ENCODE measurements at regions of chr4 and their contacts with region 1.

Region 1: DNA sequence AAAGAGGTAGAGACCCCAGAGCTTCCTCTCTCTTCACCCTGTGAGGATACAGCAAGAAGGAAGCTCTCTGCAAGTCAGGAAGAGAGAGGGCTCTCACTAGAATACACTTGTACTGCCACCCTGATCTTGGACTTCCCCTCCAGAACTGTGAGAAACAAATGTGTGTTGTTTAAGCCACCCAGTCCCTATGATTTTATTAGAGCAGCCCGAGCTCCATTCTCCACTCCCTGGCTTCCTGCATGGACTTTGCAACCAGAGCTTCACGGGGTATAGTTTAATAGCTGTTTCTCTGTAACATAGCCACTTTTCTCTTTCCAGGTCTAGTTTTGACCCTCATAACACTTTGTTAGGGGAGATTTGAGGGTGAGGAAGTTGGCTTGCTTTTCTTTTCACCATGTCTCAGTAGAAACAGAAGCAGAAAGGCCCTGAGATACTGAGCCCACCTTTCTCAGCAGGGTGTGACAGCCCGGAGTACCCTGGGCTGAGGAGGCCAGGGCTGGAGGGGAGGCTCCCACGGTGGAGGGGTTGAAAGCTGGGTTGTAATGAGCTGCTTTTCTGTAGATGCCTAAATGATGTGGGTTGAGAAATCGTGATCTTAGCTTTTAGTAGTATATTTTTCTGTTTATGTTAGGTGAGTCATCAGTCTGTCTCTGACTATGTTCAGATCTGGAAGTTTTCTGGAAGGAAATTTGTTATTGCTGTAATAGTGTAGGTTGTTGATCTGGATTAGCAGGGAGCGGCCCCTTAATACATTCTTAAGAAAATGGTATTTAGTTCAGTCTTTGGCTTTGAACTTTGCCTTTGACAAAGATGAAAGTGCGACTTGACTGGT is 118.6 kb downstream of the PTTG2 start:
- DNase-seq: peak; percentile 88
- H3K4me3 ChIP-seq: no peak overlapping the region
- H3K27ac ChIP-seq: peak overlapping the region; percentile 75
- H3K4me1 ChIP-seq: peaks cover 49% of the 10 kb centered on the region
- H3K27me3 ChIP-seq: no peaks in the 10 kb centered on the region

Region 2: DNA sequence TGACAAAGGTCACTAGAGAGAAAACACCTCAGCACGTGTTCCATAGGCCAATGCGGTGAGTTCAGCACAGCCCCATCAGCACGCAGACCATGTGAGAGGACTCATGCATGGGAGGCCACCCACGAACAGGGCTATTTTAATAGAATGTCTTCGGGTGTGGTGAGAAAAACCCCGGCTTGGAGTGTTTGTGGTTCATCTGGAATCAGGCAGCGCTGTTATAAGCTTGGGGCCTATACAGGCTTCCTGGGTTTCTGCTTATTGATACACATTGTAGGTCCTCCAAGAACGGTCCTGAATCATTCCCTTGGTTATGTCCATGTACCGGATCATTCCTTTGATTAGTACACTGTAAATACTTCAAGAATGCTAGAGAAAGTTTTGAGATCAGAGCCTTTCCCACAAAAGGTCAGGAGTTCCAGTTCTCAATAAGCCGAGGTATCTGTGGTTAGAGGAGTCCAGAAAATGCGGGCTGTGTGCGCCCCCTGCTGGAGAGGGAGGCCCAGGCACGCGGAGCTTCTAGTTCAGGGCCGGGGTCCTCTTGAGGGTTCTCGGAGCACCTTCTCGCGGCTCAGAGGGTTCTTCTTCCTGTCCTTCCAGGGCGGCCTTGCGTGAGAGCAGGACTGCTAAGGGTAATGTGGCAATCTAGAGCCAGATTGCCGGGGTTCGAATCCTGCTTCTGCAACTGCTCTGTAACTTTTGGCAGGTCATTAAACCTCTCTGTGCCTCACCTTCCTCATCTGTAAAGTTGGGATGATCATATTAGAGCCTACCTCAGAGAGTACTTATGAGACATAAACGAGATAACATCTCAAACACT is 652.2 kb after region 1 on chr4:
- in situ Hi-C with region 1: loop called (anchors 10 kb)
- DNase-seq: peak; percentile 92
- H3K4me3 ChIP-seq: no peak overlapping the region
- H3K27ac ChIP-seq: peak overlapping the region; percentile 73
- H3K4me1 ChIP-seq: peaks cover 8% of the 10 kb centered on the region
- H3K27me3 ChIP-seq: no peaks in the 10 kb centered on the region

Measured in GM23248 (cell line).